WTC11 (cell line): ENCODE measurements at regions of chr17 and their contacts with region 1.

Region 1: GRCh38 chr17:27892866-27893769 is at the start of gene LYRM9:
- DNase-seq: peak; percentile 95
- ATAC-seq: peak; percentile 90
- H3K4me3 Mint-ChIP-seq: peak within 1 kb of the TSS; percentile 61
- H3K27ac Mint-ChIP-seq: peak within 1 kb of the TSS; percentile 6; the same call in 1 of the 2 replicates
- H3K4me1 Mint-ChIP-seq: peaks cover 74% of the 10 kb centered on the region
- H3K27me3 Mint-ChIP-seq: peaks cover 10% of the 10 kb centered on the region
- CTCF ChIP-seq: peak; percentile 71; the same call in 1 of the 2 replicates
- total RNA-seq, gene LYRM9: 3.6 to 4.1 TPM (median 3.8 TPM) in 3 replicates

Region 2: DNA sequence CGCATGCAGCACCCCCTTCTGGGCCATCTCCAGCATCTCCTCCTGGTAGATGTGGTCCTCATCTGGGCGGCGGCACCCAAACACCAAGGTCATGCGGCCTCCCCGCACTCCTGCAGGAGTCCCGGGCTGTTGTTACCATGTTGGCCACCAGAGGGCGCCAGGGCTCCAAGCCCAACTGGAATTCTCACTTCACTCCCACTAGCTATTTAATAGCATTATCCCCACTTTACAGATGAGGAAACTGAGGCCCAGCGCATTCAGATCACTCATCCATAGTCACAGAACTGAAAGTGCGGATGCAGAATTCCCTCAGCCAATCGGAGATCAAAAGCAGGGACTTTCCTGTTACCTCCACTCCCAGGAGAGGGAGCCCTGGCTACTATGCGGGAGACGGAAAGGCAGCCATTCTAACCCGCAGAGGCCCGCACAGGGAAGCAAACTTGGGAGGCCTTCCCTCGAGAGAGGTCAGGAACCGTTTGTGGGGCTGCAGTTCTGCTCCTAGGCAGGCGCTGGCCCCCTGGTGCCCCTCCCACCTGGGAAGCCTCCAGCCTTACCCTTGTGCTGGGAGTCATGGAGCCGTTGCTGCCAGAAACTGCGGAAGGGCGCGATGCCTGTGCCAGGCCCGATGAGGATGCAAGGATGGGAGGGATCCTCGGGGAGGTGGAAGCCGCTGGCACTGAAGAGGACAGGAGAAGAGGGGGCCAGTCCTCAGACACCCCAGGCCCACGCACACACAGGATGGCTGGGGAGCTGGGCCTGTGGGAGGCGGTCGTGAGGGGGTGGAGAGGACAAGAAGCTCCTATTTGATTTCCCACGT is 132.8 kb before region 1 on chr17:
- CTCF ChIA-PET with region 1: interaction called, 11 read pairs
- POLR2A ChIA-PET with region 1: no interaction called
- DNase-seq: peak; percentile 87
- ATAC-seq: peak; percentile 85
- H3K4me3 Mint-ChIP-seq: no peak overlapping the region
- H3K27ac Mint-ChIP-seq: no peak overlapping the region
- H3K4me1 Mint-ChIP-seq: no peaks in the 10 kb centered on the region
- H3K27me3 Mint-ChIP-seq: no peaks in the 10 kb centered on the region
- CTCF ChIP-seq: peak; percentile 99

Region 3: GRCh38 chr17:27907976-27908558 is 14.9 kb after region 1 on chr17:
- CTCF ChIA-PET with region 1: interaction called, 15 read pairs
- POLR2A ChIA-PET with region 1: no interaction called
- DNase-seq: no peak
- ATAC-seq: no peak
- H3K4me3 Mint-ChIP-seq: no peak overlapping the region
- H3K27ac Mint-ChIP-seq: no peak overlapping the region
- H3K4me1 Mint-ChIP-seq: peaks cover 31% of the 10 kb centered on the region
- H3K27me3 Mint-ChIP-seq: peaks cover 81% of the 10 kb centered on the region
- CTCF ChIP-seq: no peak

Region 4: GRCh38 chr17:27915709-27916108 is 22.6 kb after region 1 on chr17:
- CTCF ChIA-PET with region 1: interaction called, 16 read pairs
- POLR2A ChIA-PET with region 1: interaction called, 3 read pairs
- DNase-seq: peak; percentile 50
- ATAC-seq: peak; percentile 92
- H3K4me3 Mint-ChIP-seq: no peak overlapping the region
- H3K27ac Mint-ChIP-seq: no peak overlapping the region
- H3K4me1 Mint-ChIP-seq: peaks cover 14% of the 10 kb centered on the region
- H3K27me3 Mint-ChIP-seq: peaks cover 92% of the 10 kb centered on the region
- CTCF ChIP-seq: no peak

Region 5: GRCh38 chr17:27950995-27951394 is 57.9 kb after region 1 on chr17:
- CTCF ChIA-PET with region 1: interaction called, 23 read pairs
- POLR2A ChIA-PET with region 1: no interaction called
- DNase-seq: no peak
- ATAC-seq: no peak
- H3K4me3 Mint-ChIP-seq: no peak overlapping the region
- H3K27ac Mint-ChIP-seq: no peak overlapping the region
- H3K4me1 Mint-ChIP-seq: peaks cover 24% of the 10 kb centered on the region
- H3K27me3 Mint-ChIP-seq: no peaks in the 10 kb centered on the region; the same call in 1 of the 2 replicates
- CTCF ChIP-seq: no peak

Region 6: GRCh38 chr17:28227316-28228125 is 334.4 kb after region 1 on chr17:
- CTCF ChIA-PET with region 1: interaction called, 11 read pairs
- POLR2A ChIA-PET with region 1: no interaction called
- DNase-seq: peak; percentile 98
- ATAC-seq: peak; percentile 92
- H3K4me3 Mint-ChIP-seq: peak overlapping the region; percentile 97
- H3K27ac Mint-ChIP-seq: peak overlapping the region; percentile 98
- H3K4me1 Mint-ChIP-seq: peaks cover 21% of the 10 kb centered on the region
- H3K27me3 Mint-ChIP-seq: peaks cover 4% of the 10 kb centered on the region; the same call in 1 of the 2 replicates
- CTCF ChIP-seq: no peak